Caco-2 (cell line): ENCODE measurements at regions of chr6 and their contacts with region 1.

Region 1: DNA sequence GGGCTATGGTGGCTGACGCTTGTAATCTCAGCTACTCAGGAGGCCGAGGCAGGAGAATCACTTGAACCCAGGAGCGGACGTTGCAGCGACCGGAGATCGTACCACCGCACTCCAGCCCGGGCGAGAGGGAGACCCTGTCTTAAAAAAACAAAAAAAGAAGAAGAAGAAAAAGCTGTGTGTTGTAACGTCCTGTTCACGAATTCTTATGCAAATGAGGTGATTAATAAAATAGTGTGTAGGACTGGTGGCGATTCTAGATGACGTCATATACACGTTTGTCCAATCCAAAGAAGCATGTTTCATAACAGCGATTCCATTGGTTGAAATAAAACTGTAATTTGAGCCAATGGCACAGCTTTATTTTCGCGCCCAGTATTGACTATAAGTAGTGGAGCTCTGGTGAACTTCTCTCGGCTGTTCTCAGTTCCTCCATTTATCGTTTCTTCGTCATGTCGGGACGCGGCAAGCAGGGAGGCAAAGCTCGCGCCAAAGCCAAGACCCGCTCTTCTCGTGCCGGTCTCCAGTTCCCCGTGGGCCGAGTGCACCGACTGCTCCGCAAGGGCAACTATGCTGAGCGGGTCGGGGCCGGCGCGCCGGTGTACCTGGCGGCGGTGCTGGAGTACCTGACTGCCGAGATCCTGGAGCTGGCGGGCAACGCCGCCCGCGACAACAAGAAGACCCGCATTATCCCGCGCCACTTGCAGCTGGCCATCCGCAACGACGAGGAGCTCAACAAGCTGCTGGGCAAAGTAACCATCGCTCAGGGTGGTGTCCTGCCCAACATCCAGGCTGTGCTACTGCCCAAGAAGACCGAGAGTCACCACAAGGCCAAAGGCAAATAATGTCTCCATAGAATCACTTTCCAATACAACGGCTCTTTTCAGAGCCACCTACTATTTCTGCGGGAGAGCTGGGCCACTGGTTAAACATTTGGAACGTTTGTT is 47.0 kb downstream of the OR2B2 start:
- DNase-seq: peak; percentile 85 to 89
- H3K4me3 ChIP-seq: peak overlapping the region; percentile 49
- H3K4me3 Mint-ChIP-seq: peak overlapping the region; percentile 76
- H3K27ac Mint-ChIP-seq: peak overlapping the region; percentile 99
- H3K4me1 ChIP-seq: 0 out of 2 replicates have a peak, but pooled peaks cover 4% of the 10 kb centered on the region
- H3K4me1 Mint-ChIP-seq: peaks cover 12% of the 10 kb centered on the region
- H3K27me3 ChIP-seq: no peaks in the 10 kb centered on the region
- H3K27me3 Mint-ChIP-seq: peaks cover 9% of the 10 kb centered on the region
- CTCF ChIP-seq: no peak

Region 2: GRCh38 chr6:27091661-27092646 is 773.2 kb before region 1 on chr6:
- CTCF ChIA-PET with region 1: no interaction called
- POLR2A ChIA-PET with region 1: interaction called, 12 read pairs
- intact Hi-C with region 1: no loop called
- DNase-seq: peak; percentile 53 to 65
- H3K4me3 ChIP-seq: peak overlapping the region; percentile 55
- H3K4me3 Mint-ChIP-seq: peak overlapping the region; percentile 89
- H3K27ac Mint-ChIP-seq: peak overlapping the region; percentile 83
- H3K4me1 ChIP-seq: no peaks in the 10 kb centered on the region
- H3K4me1 Mint-ChIP-seq: no peaks in the 10 kb centered on the region
- H3K27me3 ChIP-seq: no peaks in the 10 kb centered on the region
- H3K27me3 Mint-ChIP-seq: peaks cover 2% of the 10 kb centered on the region
- CTCF ChIP-seq: no peak